Calu3 (cell line): ENCODE measurements at regions of chr11 and their contacts with region 1.

Region 1: DNA sequence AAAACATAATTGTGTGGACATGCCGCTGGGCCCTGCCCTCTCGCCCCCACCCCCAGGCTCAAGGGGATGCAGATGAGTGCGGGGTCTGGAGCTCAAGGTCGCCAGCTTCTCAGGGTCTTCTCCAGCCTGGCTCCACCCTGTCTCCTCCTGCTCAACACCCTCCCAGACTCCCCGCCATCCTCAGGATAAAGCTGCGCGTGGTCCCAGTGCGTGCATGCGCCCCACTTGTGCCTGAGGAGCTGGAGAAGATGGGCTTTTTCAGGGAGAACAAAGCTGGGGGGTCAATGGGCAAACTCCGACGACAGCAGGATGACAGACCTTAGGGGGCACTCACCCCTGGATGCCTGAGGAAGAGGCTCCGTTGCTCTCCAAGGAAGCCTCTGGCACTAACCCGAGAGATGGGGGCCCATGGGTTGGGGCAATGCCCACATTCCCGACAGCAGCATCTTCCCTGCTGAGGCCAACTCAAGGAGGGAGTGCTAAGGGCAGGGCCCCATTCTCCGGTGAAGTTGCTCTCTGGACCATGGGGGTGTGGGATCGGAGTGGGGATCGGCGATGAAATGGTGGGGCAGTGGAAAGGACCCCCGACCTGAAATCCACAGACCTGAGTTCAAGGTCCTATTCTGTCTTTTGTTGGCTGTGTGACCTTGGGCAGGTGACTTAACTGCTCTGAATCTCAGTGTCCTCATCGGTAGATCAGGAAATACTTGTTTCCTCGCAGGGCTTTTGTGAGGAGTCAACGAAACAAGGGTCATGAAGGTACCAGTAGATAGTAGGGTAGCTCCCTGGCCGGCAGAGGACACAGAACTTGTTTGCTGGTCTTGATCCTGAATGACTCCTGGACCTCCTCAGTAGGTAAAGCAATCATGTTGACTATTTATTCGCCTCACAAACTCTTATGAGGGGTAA is 47.7 kb downstream of the WNT11 start:
- DNase-seq: no peak
- H3K4me3 Mint-ChIP-seq: no peak overlapping the region
- H3K27ac Mint-ChIP-seq: no peak overlapping the region
- H3K4me1 Mint-ChIP-seq: peaks cover 2% of the 10 kb centered on the region
- H3K27me3 Mint-ChIP-seq: peaks cover 60% of the 10 kb centered on the region
- CTCF ChIP-seq: no peak

Region 2: GRCh38 chr11:74546724-74547123 is 1611.9 kb before region 1 on chr11:
- CTCF ChIA-PET with region 1: no interaction called
- intact Hi-C with region 1: no loop called
- DNase-seq: peak; percentile 85
- H3K4me3 Mint-ChIP-seq: peak overlapping the region; percentile 22
- H3K27ac Mint-ChIP-seq: peak overlapping the region; percentile 17
- H3K4me1 Mint-ChIP-seq: peaks cover 40% of the 10 kb centered on the region
- H3K27me3 Mint-ChIP-seq: no peaks in the 10 kb centered on the region
- CTCF ChIP-seq: no peak

Region 3: DNA sequence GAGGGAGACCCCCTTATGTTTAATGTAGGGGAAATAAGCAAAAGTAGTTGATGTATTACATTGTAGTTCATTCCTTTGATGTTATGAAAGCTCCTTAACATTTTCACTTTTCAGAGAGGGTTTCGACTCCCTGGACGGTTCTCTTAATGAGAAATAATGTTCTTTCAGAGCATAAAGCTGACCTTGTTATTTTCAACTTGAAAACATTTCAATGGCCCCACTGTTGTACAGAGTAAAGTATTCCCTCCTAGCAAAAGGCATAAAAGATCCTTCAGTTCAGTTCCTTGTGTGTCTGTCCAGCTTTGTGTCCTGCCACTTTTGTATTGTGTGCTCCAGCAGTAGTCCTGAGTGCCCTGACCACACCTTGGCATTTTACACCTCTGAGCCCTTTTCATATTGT is 279.7 kb before region 1 on chr11:
- CTCF ChIA-PET with region 1: interaction called, 11 read pairs
- intact Hi-C with region 1: no loop called
- DNase-seq: no peak
- H3K4me3 Mint-ChIP-seq: no peak overlapping the region
- H3K27ac Mint-ChIP-seq: no peak overlapping the region
- H3K4me1 Mint-ChIP-seq: peaks cover 6% of the 10 kb centered on the region
- H3K27me3 Mint-ChIP-seq: no peaks in the 10 kb centered on the region
- CTCF ChIP-seq: no peak